GM12878 (cell line): ENCODE measurements at regions of chr1 and their contacts with region 1.

Region 1: GRCh38 chr1:25037174-25038074 is 107.3 kb upstream of the RUNX3 start:
- DNase-seq: no peak
- ATAC-seq: peak; percentile 33
- H3K4me3 ChIP-seq: no peak overlapping the region
- H3K27ac ChIP-seq: peak overlapping the region; percentile 69
- H3K4me1 ChIP-seq: peaks cover 51% of the 10 kb centered on the region
- H3K27me3 ChIP-seq: no peaks in the 10 kb centered on the region
- CTCF ChIP-seq: peak; percentile 67 to 90 (median 79)
- EP300 ChIP-seq: no peak
- POLR2A ChIP-seq: no peak
- RAD21 ChIP-seq: peak; percentile 74

Region 2: GRCh38 chr1:24847995-24848881 is 189.2 kb before region 1 on chr1:
- CTCF ChIA-PET with region 1: interaction called, 70 read pairs
- POLR2A ChIA-PET with region 1: no interaction called
- RAD21 ChIA-PET with region 1: interaction called, 13 read pairs
- SMC1A ChIA-PET with region 1: interaction called, 37 read pairs
- in situ Hi-C with region 1: loop called (anchors 5 kb)
- intact Hi-C with region 1: loop called (anchors 1 kb)
- DNase-seq: peak; percentile 71
- ATAC-seq: peak; percentile 97
- H3K4me3 ChIP-seq: peak overlapping the region; percentile 56; the same call in 1 of the 2 replicates
- H3K27ac ChIP-seq: no peak overlapping the region
- H3K4me1 ChIP-seq: no peaks in the 10 kb centered on the region
- H3K27me3 ChIP-seq: no peaks in the 10 kb centered on the region
- CTCF ChIP-seq: peak; percentile 93 to 99 (median 98)
- EP300 ChIP-seq: no peak
- POLR2A ChIP-seq: peak; percentile 84
- RAD21 ChIP-seq: peak; percentile 93

Region 3: DNA sequence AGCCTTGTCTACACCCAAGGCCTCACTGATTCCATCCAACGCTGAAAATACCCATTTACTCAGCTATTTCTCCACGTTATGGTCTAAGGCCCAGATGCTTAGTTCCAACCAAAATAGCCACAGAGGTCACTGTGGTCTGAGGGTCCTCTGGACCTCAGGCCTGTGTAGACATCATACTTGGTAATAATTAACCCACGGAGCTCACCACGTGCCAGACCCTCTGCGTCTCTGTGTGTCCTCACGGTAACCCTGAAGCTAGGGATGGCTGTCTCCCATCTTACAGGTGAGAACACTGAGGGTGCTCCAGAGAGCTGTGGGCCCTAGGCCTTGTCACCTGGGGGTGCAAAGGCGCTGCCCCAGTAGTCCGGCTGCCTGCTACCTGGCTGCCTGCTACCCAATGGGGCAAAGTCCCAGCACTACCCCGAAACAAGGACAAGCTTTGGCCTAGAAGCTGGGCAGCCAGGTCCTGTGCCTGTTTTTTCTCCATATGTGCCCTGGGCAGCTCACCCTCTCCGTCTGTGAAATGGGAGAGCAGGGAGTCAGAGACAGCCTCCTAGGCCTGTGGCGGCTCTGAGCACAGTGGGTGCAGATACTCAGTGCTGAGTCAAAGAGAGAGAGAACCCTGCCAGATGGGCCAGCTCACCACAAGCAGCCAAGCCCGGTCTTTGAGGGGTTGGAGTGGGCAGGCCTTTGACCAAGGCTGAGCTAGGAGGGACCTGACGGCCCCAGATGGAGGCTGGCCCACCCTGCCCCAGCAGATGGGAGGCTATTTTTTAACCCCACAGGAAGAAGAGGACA is 90.4 kb before region 1 on chr1:
- CTCF ChIA-PET with region 1: interaction called, 396 read pairs
- POLR2A ChIA-PET with region 1: interaction called, 20 read pairs
- RAD21 ChIA-PET with region 1: interaction called, 68 read pairs
- SMC1A ChIA-PET with region 1: interaction called, 292 read pairs
- in situ Hi-C with region 1: no loop called
- intact Hi-C with region 1: no loop called
- DNase-seq: peak; percentile 70
- ATAC-seq: peak; percentile 84
- H3K4me3 ChIP-seq: 0 out of 2 replicates have a peak overlapping the region, but pooled peaks have one; percentile 44
- H3K27ac ChIP-seq: peak overlapping the region; percentile 85
- H3K4me1 ChIP-seq: peaks cover 56% of the 10 kb centered on the region
- H3K27me3 ChIP-seq: no peaks in the 10 kb centered on the region
- CTCF ChIP-seq: no peak
- EP300 ChIP-seq: peak; percentile 22 to 47; a peak in 2 of 4 replicates
- POLR2A ChIP-seq: peak; percentile 61; the same call in 1 of the 2 replicates
- RAD21 ChIP-seq: no peak

Region 4: DNA sequence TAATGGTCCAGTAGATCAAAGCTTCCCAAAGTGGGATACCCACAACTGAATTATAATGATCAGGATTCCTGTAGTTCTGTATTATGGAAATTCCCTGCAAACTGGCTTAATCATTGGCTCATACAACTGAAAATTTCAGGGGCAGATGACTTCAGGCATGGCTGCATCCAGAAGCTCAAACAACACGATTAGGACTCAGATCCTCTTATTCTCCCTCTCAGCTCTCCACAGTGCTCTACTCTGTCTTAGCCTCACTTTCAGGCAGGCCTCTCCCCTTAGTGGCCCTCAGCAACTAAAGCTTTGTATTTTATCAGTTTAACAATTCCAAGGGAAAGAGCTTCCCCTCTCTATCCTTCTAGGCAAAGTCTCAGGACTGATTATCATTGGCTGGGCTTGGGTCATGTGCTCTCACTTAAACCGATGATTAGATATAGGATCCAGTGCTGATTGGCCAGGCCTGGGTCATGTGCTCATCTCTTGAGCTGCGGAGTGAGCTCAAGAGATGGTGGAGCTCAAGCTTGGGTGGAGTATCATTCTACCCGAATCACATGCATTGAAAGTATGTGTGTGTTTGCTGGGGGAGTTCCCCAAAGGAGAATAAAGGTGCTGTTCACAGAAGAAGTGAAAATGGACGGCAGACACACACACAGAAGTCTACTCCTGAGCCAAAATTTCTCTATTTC is 49.4 kb before region 1 on chr1:
- CTCF ChIA-PET with region 1: interaction called, 12 read pairs
- POLR2A ChIA-PET with region 1: no interaction called
- RAD21 ChIA-PET with region 1: interaction called, 3 read pairs
- SMC1A ChIA-PET with region 1: interaction called, 11 read pairs
- in situ Hi-C with region 1: no loop called
- intact Hi-C with region 1: no loop called
- DNase-seq: peak; percentile 42
- ATAC-seq: peak; percentile 93
- H3K4me3 ChIP-seq: no peak overlapping the region
- H3K27ac ChIP-seq: no peak overlapping the region
- H3K4me1 ChIP-seq: peaks cover 12% of the 10 kb centered on the region
- H3K27me3 ChIP-seq: no peaks in the 10 kb centered on the region
- CTCF ChIP-seq: no peak
- EP300 ChIP-seq: peak in 1 of 2 experiments; percentile 10; a peak in 1 of 4 replicates
- POLR2A ChIP-seq: no peak
- RAD21 ChIP-seq: 0 out of 2 replicates have a peak, but pooled peaks have one; percentile 5

Region 5: DNA sequence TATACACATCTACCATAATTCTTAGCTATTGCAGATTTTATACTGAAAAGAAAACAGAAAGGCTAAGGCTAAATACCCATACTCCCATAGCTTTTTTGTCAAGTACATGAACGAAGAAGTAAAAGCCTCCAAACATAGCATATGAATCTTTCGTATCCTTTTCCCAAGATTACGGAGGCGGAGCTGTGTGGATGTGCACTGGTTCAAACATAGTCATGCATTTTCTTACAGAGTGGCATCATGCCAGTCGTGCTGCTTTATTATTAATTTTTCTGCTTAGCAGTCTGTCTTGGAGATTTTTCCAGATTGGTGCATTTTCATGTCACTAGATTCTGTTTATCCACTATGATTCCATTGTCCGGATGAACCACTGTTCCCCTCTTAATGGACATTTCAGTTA is 11.3 kb after region 1 on chr1:
- CTCF ChIA-PET with region 1: interaction called, 33 read pairs
- POLR2A ChIA-PET with region 1: no interaction called
- RAD21 ChIA-PET with region 1: interaction called, 3 read pairs
- SMC1A ChIA-PET with region 1: interaction called, 7 read pairs
- in situ Hi-C with region 1: no loop called
- intact Hi-C with region 1: no loop called
- DNase-seq: no peak
- ATAC-seq: no peak
- H3K4me3 ChIP-seq: no peak overlapping the region
- H3K27ac ChIP-seq: no peak overlapping the region
- H3K4me1 ChIP-seq: peaks cover 12% of the 10 kb centered on the region
- H3K27me3 ChIP-seq: peaks cover 3 to 4% of the 10 kb centered on the region in 2 experiments; a peak in 3 of 4 replicates
- CTCF ChIP-seq: no peak
- EP300 ChIP-seq: no peak
- POLR2A ChIP-seq: no peak
- RAD21 ChIP-seq: no peak

Region 6: DNA sequence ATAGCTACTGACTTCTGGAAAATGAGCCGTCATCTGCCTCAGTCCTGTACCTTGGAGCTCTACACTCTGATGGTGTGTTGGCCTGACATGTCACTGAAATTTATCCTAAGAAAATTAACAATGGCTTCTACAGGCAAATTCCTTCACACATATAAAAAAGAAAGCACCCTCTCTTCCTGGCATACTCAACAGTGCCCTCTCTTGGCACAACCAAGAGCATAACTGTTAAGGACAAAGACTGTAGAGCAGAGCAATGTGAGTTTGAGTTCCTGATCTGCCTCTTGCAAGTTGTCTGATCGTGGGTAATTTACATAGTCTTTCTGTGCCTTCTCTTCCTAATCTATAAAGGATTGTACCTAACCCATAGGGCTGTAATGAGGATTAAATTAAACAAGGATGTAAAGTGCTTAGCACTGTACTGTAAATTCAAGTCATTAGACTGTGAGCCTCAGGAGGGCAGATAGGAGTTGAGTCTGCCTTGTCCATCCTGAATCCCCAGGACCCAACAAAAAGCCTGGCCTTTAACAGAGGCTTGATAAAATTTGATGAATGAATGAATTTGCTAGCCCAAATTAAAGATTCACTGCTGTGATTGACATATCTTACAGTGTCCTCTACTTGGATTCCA is 111.4 kb after region 1 on chr1:
- CTCF ChIA-PET with region 1: interaction called, 18 read pairs
- POLR2A ChIA-PET with region 1: no interaction called
- RAD21 ChIA-PET with region 1: interaction called, 8 read pairs
- SMC1A ChIA-PET with region 1: interaction called, 9 read pairs
- in situ Hi-C with region 1: no loop called
- intact Hi-C with region 1: loop called (anchors 5 kb)
- DNase-seq: no peak
- ATAC-seq: peak; percentile 78
- H3K4me3 ChIP-seq: no peak overlapping the region
- H3K27ac ChIP-seq: no peak overlapping the region
- H3K4me1 ChIP-seq: peaks cover 12% of the 10 kb centered on the region
- H3K27me3 ChIP-seq: peaks cover 2 to 12% of the 10 kb centered on the region in 2 experiments
- CTCF ChIP-seq: peak; percentile 61 to 81 (median 67)
- EP300 ChIP-seq: no peak
- POLR2A ChIP-seq: no peak
- RAD21 ChIP-seq: peak; percentile 82